Ovary (tissue), 10 donors: ENCODE measurements at regions of chr1 and their contacts with region 1.

Region 1: DNA sequence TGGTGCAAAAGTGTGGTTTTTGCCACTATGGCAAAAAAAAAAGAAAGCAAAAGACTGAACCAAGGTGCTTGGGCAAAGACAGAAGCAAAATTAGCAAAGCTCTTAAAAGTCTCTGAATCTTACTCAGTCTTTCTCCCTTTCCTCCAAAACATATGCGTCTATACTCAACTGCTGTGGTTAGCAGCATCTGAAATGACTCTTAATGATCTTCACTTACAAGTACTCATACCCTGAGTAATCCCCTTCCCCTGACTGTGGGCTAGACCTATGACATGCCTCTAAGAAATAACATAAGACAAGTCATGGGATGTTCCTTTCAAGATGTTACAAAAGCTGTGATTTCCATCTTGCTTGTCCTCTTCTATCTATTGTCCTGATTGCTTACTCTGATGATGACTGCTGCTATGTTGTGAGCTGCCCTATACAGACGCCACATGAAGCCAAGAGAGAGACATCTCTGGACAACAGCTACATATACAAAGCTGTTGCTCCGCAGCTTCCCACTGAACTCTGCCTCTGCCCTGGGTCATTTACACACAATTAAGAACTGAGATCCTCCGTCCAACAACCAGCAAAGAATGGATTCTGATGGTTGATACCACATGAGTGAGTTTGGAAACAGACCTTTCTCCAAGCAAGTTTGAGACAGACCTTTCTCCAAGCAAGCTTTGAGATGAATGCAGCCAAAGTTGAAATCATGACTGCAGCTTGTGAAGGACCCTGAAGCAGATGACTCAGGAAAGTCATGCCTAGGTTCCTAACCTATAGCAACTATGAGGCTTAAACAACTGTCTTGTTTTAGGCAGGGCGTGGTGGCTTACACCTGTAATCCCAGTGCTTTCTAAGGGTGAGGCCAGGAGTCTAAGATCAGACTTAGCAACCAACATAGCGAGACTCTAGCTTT is 55.2 kb downstream of the PUM1 start:
- DNase-seq: no peak
- H3K4me3 ChIP-seq: no peak overlapping the region
- H3K27ac ChIP-seq: no peak overlapping the region
- H3K4me1 ChIP-seq: peaks cover 8% of the 10 kb centered on the region
- H3K27me3 ChIP-seq: no peaks in the 10 kb centered on the region
- CTCF ChIP-seq: no peak
- EP300 ChIP-seq: no peak
- POLR2A ChIP-seq: no peak

Region 2: GRCh38 chr1:30955448-30956015 is 54.8 kb before region 1 on chr1:
- intact Hi-C with region 1: loop called in 1 of 4 experiments (anchors 2 kb)
- DNase-seq: no peak
- H3K4me3 ChIP-seq: no peak overlapping the region
- H3K27ac ChIP-seq: no peak overlapping the region
- H3K4me1 ChIP-seq: peaks cover 3% of the 10 kb centered on the region
- H3K27me3 ChIP-seq: no peaks in the 10 kb centered on the region
- CTCF ChIP-seq: no peak
- EP300 ChIP-seq: no peak
- POLR2A ChIP-seq: no peak

Region 3: DNA sequence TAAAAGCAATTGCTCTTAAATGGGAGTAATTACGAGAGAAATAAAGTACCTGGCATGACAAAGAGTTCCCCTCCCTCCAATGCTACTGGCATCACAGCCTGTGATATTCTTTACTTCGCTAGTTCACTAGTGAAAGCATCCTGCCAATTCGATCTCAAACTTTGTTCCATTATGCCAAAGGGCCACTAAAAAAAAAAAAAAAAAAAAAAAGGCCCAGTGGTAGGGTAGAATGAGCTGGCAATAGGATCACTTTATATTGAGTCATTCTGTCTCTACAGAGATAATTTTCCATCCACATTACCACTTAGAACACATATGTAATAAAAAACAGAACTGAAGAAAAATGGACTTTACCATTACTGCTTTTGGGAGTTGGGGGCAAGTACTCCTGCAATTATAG is 44.0 kb after region 1 on chr1:
- intact Hi-C with region 1: no loop called
- DNase-seq: no peak
- H3K4me3 ChIP-seq: no peak overlapping the region
- H3K27ac ChIP-seq: no peak overlapping the region
- H3K4me1 ChIP-seq: peaks cover 16% of the 10 kb centered on the region
- H3K27me3 ChIP-seq: no peaks in the 10 kb centered on the region
- CTCF ChIP-seq: no peak
- EP300 ChIP-seq: no peak
- POLR2A ChIP-seq: no peak

Region 4: DNA sequence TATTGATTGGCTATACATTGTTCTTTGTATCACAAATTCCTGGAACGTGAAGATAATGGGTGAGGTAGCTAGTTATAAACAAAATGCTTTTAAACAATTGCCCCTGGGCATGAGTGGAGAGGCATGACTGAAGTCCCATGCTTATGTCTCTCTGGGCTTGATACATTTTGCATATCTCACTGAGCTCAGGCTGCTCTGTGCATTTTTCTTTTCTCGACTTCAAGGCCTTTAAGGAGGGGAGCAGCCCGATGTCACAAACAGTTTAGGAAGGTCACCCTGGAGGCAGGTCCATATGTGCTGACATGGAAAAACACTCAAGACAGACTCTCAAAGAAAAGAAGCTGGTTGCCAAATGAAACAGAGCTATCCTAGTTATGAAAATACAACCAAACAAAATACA is 135.3 kb after region 1 on chr1:
- intact Hi-C with region 1: loop called in 1 of 4 experiments (anchors 10 kb)
- DNase-seq: no peak
- H3K4me3 ChIP-seq: no peak overlapping the region
- H3K27ac ChIP-seq: no peak overlapping the region
- H3K4me1 ChIP-seq: peaks cover 2% of the 10 kb centered on the region
- H3K27me3 ChIP-seq: no peaks in the 10 kb centered on the region
- CTCF ChIP-seq: no peak
- EP300 ChIP-seq: no peak
- POLR2A ChIP-seq: no peak

Region 5: DNA sequence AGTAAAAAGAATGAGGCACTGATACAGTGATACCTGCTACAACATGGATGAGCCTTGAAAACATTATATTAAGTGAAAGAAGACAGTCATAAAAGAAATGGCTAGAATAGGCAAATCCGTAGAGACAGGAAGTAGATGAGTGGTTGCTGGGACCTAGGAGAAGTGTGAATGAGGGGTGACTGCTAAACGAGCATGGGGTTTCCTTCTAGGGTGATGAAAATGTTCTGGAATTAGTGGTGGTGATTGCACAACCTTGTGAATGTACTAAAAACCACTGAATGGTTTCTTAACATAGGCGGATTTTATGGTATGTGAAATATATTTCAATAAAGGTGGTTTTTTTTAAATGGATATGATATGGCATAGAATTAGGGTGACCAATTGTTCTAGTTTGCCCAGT is 390.1 kb after region 1 on chr1:
- intact Hi-C with region 1: no loop called
- DNase-seq: no peak
- H3K4me3 ChIP-seq: no peak overlapping the region
- H3K27ac ChIP-seq: no peak overlapping the region
- H3K4me1 ChIP-seq: no peaks in the 10 kb centered on the region
- H3K27me3 ChIP-seq: no peaks in the 10 kb centered on the region
- CTCF ChIP-seq: no peak
- EP300 ChIP-seq: no peak
- POLR2A ChIP-seq: no peak

Region 6: DNA sequence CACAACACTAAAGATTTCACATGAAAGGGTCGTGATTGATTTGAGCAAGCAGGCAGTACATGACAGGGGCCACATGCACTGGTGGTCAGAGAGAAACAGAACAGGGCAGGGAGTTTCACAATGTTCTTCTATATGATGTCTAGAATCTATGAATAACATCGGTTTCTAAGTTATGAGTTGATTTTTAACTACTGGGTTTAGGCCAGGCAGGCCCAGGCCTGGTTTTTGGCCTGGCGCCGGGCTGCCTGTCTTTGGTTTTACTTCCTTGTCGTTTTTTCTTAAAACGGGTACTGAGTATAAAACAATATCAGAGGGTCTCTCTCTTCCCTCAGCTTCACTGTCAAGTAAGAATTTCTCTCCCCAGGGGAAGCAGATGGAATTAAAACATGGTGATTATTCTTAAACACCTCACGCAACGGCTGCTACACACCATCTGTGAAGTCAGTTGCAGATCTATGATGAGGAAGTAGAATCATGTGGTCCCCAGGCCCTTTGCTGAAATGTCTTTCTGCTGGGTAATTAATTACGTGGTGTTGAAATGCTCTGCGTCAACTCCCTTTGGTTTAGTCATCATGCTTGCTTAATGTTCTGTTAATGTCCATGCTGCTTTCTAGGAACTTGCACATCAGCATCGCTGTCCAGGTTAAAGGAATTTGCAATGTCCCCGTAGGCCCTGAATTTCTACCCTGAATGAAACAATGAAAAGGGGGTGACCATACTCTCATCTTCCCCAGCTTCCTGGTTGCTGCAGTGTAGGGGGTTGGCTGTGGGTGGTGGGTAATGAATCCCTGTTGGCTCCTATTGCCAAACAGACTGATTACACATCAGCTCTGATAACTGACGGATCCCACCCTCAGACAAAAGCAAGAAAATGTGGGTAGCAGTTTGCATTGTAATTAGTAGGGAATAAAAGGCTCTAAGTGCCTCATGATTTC is 472.9 kb after region 1 on chr1:
- intact Hi-C with region 1: no loop called
- DNase-seq: no peak
- H3K4me3 ChIP-seq: no peak overlapping the region
- H3K27ac ChIP-seq: no peak overlapping the region
- H3K4me1 ChIP-seq: no peaks in the 10 kb centered on the region
- H3K27me3 ChIP-seq: no peaks in the 10 kb centered on the region
- CTCF ChIP-seq: no peak
- EP300 ChIP-seq: peak; percentile 27
- POLR2A ChIP-seq: no peak